ENCODE measurements at regions of chr14 and their contacts with region 1.

Region 1: GRCh38 chr14:73886449-73887317 is at the start of gene ZNF410:
- DNase-seq: peak; percentile 97
- ATAC-seq: peak; percentile 100
- H3K4me3 Mint-ChIP-seq: peak within 1 kb of the TSS; percentile 80
- H3K27ac Mint-ChIP-seq: peak within 1 kb of the TSS; percentile 99
- H3K4me1 Mint-ChIP-seq: peaks cover 43% of the 10 kb centered on the region
- H3K27me3 Mint-ChIP-seq: no peaks in the 10 kb centered on the region
- total RNA-seq, gene ZNF410: 58.6 to 66.2 TPM

Region 2: GRCh38 chr14:73058224-73058921 is 828.3 kb before region 1 on chr14 and contains the start of gene RBM25:
- CTCF ChIA-PET with region 1: no interaction called
- POLR2A ChIA-PET with region 1: no interaction called
- intact Hi-C with region 1: loop called in 1 of 2 experiments (anchors 1 kb)
- DNase-seq: peak; percentile 97
- ATAC-seq: peak; percentile 95
- H3K4me3 Mint-ChIP-seq: no peak within 1 kb of the TSS
- H3K27ac Mint-ChIP-seq: no peak within 1 kb of the TSS
- H3K4me1 Mint-ChIP-seq: peaks cover 31% of the 10 kb centered on the region
- H3K27me3 Mint-ChIP-seq: no peaks in the 10 kb centered on the region
- total RNA-seq, gene RBM25: 95.6 to 115 TPM

Region 3: GRCh38 chr14:73305499-73305898 is 581.2 kb before region 1 on chr14:
- CTCF ChIA-PET with region 1: no interaction called
- POLR2A ChIA-PET with region 1: no interaction called
- intact Hi-C with region 1: no loop called
- DNase-seq: no peak
- ATAC-seq: no peak
- H3K4me3 Mint-ChIP-seq: no peak overlapping the region
- H3K27ac Mint-ChIP-seq: no peak overlapping the region
- H3K4me1 Mint-ChIP-seq: peaks cover 2% of the 10 kb centered on the region
- H3K27me3 Mint-ChIP-seq: no peaks in the 10 kb centered on the region

Region 4: GRCh38 chr14:73568381-73568781 is 318.3 kb before region 1 on chr14:
- CTCF ChIA-PET with region 1: no interaction called
- POLR2A ChIA-PET with region 1: no interaction called
- intact Hi-C with region 1: loop called in 1 of 2 experiments (anchors 1 kb)
- DNase-seq: peak; percentile 50
- ATAC-seq: peak; percentile 32
- H3K4me3 Mint-ChIP-seq: peak overlapping the region; percentile 95
- H3K27ac Mint-ChIP-seq: peak overlapping the region; percentile 97
- H3K4me1 Mint-ChIP-seq: peaks cover 47% of the 10 kb centered on the region
- H3K27me3 Mint-ChIP-seq: no peaks in the 10 kb centered on the region

Region 5: GRCh38 chr14:73728717-73729330 is 157.9 kb before region 1 on chr14:
- CTCF ChIA-PET with region 1: interaction called, 14 read pairs
- POLR2A ChIA-PET with region 1: no interaction called
- intact Hi-C with region 1: no loop called
- DNase-seq: peak; percentile 93
- ATAC-seq: peak; percentile 90
- H3K4me3 Mint-ChIP-seq: no peak overlapping the region
- H3K27ac Mint-ChIP-seq: peak overlapping the region; percentile 64
- H3K4me1 Mint-ChIP-seq: peaks cover 38% of the 10 kb centered on the region
- H3K27me3 Mint-ChIP-seq: no peaks in the 10 kb centered on the region

Region 6: DNA sequence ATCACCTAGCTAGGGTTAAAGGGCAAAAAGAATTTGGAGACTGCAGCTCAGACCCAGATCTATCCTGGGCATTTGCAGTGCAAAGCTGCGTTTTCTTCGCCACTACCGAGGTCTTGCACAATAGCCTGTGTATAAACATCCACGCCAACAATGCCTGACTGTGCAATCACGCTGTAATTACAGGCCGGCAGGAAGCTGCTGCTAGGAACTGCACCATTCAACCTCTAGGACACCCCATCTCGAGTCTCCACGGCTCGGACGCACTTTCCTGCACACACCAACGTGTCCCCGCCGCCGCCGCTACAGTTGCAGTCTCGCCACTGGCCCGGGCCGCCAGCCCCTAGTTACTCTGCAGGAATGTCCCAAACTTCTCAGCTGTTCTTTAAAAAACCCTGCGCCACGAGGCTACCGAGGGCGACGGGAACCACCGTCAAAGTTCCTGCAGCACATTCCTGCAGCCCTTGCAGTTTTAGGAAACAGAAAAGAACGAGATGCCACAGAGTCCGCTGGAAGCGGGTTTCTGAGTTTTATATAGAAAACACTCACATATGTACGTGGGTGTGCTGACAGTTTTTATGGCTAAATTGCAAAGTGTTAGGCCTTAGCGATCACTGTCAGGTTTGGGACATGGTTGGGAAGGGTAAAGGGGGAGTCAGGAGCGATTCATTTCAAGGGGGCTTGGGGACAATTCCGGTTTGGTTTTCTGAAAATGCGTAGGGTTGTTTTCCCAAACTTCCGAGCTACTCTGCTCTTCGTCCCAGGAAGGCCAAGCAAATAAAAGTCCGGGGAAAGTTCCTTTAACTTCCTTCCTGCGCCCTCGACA is 100.6 kb before region 1 on chr14:
- CTCF ChIA-PET with region 1: no interaction called
- POLR2A ChIA-PET with region 1: no interaction called
- intact Hi-C with region 1: loop called in 1 of 2 experiments (anchors 1 kb)
- DNase-seq: peak; percentile 81
- ATAC-seq: peak; percentile 67
- H3K4me3 Mint-ChIP-seq: peak overlapping the region; percentile 94
- H3K27ac Mint-ChIP-seq: peak overlapping the region; percentile 93
- H3K4me1 Mint-ChIP-seq: peaks cover 56% of the 10 kb centered on the region
- H3K27me3 Mint-ChIP-seq: no peaks in the 10 kb centered on the region

Region 7: GRCh38 chr14:73949744-73950734 is 63.4 kb after region 1 on chr14 and contains the starts of genes COQ6 and FAM161B:
- CTCF ChIA-PET with region 1: no interaction called
- POLR2A ChIA-PET with region 1: no interaction called
- intact Hi-C with region 1: loop called (anchors 1 kb)
- DNase-seq: peak; percentile 95
- ATAC-seq: peak; percentile 96
- H3K4me3 Mint-ChIP-seq: peak within 1 kb of the TSS; percentile 91
- H3K27ac Mint-ChIP-seq: peak within 1 kb of the TSS; percentile 88
- H3K4me1 Mint-ChIP-seq: peaks cover 14% of the 10 kb centered on the region
- H3K27me3 Mint-ChIP-seq: no peaks in the 10 kb centered on the region
- total RNA-seq, gene COQ6: 14.1 to 17.0 TPM
- total RNA-seq, gene FAM161B: 1.2 to 1.4 TPM

Region 8: DNA sequence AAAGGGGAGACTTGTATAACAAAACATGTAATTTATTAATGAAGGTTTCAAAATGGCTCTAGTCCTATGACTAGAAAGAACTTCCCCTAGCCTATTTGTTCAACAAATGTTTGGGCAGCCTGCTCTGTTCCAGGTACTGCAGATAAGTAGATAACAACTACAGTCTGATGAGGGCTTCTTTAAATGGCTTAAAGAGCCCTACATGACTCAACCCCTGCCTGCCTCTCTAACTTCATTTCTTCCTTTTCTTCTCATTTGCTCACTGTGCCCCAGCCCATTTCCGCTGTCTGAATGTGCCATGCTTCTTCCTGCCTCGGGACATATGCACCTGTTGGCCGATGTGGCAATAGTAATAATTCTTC is 176.1 kb after region 1 on chr14:
- CTCF ChIA-PET with region 1: no interaction called
- POLR2A ChIA-PET with region 1: no interaction called
- intact Hi-C with region 1: no loop called
- DNase-seq: no peak
- ATAC-seq: no peak
- H3K4me3 Mint-ChIP-seq: no peak overlapping the region
- H3K27ac Mint-ChIP-seq: no peak overlapping the region
- H3K4me1 Mint-ChIP-seq: no peaks in the 10 kb centered on the region
- H3K27me3 Mint-ChIP-seq: no peaks in the 10 kb centered on the region

Region 9: DNA sequence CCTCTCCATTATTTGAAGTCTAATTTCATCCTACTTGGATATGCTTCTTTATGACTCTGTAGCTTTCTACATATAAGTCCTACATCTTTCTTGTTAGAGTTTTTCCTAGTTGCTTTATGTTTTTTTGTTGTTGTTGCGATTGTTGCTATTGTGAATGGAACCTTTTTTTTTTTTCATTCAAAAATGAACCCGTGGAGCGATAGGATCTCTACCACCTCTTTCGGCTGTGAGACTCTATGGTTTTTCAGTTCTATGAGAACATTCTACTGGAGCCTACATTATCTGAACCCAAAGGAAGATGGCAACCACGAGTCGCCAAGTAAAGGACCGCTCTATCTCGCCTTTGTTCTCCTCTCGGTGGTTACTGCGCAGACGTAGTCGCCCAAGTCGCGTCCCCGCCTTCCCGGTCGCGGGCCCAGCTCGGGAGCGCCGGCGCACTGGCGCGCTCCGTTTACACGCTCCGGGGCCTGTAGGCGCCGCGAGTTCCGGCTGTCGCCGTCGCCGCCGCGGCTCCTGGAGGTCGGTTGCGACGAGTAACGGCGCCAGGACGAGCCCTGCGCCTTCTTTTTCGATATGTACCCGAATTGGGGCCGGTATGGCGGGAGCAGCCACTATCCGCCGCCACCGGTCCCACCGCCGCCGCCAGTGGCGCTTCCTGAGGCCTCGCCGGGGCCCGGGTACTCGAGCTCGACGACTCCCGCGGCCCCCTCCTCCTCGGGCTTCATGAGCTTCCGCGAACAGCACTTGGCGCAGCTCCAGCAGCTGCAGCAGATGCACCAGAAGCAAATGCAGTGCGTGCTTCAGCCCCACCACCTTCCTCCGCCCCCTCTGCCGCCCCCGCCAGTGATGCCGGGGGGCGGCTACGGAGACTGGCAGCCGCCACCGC is 876.5 kb after region 1 on chr14 and contains the start of gene YLPM1:
- CTCF ChIA-PET with region 1: no interaction called
- POLR2A ChIA-PET with region 1: no interaction called
- intact Hi-C with region 1: loop called in 1 of 2 experiments (anchors 2 kb)
- DNase-seq: peak; percentile 95
- ATAC-seq: peak; percentile 92
- H3K4me3 Mint-ChIP-seq: peak within 1 kb of the TSS; percentile 96
- H3K27ac Mint-ChIP-seq: peak within 1 kb of the TSS; percentile 97
- H3K4me1 Mint-ChIP-seq: peaks cover 42% of the 10 kb centered on the region
- H3K27me3 Mint-ChIP-seq: no peaks in the 10 kb centered on the region
- total RNA-seq, gene YLPM1: 53.0 to 60.9 TPM

Measured in activated CD4-positive, alpha-beta T cell treated with anti-CD3 and anti-CD28 coated beads for 36 hours (primary cell).